ENCODE measurements at regions of chr12 and their contacts with region 1.

Region 1: DNA sequence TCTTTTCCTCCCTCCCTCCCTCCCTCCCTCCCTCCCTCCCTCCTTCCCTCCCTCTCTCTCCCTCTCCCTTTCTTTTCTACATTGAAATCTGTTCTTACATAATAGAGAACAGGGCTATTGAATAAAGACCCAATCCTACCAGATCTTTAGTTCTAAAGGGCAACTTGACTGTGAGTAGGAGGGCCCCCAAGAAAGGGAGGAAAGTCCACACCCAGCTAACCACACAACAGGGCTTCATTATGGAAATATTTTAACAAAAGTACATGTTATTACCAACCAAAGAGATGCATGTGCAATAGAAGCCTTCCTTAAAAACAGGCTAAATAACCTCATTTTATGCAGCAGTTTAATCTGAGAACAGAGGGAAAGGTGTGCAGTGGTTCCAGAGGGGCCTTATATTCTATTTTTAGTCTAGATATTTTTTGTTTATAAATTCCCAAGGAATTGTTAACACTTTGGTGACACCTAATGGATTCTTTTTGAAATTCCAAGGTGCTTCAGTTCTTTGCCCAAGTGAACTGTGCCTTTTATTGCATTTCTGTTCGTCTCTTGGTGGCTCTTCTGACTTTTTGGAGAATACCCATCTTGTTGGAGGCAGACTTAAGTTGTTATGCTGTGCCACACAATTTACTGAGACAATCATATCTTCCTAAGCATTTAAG is 63.0 kb downstream of the GNS start:
- DNase-seq: no peak
- H3K4me3 ChIP-seq: no peak overlapping the region
- CTCF ChIP-seq: no peak

Region 2: DNA sequence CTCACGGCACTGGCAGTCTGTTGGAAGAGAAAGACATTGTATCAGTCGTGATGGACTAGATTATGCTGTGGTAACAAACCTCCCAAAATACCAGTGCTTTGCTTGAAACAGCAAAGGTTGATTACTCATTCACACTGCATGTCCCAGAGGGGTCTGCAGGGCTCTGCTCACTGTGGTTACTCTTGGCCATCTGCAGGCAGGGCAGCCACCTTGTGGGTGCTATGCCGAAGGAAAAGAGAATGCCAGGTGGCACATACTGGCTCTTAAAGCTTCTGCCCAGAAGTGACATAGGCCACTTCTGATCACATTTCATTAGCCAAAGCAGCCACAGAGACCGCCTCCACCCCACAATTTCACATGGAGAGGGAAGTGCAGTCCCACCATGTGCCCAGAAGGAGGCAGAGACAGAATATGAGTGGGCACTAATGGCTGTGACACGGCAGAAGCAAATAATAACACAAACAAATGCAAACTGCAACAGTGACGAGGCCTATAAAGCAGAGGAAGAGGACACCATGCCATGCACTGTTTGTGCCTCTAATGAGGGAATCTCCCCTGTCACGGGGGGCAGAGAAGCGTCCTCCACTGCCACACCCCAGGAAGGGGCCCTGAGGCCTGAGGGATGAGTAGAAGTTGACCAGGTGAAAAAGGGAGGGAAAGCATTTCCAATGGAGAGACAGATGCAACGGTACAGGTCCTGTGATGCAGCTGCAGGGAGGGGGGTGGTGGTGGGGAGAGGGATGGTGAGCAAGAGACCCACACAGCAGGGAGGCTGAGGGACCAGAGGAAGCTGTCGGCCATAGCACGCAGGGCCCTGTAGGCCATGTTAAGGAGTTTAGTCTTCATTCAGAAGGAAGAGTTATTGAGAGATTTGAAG is 422.4 kb before region 1 on chr12:
- CTCF ChIA-PET with region 1: no interaction called
- POLR2A ChIA-PET with region 1: no interaction called
- DNase-seq: no peak
- H3K4me3 ChIP-seq: no peak overlapping the region
- CTCF ChIP-seq: peak; percentile 14

Region 3: DNA sequence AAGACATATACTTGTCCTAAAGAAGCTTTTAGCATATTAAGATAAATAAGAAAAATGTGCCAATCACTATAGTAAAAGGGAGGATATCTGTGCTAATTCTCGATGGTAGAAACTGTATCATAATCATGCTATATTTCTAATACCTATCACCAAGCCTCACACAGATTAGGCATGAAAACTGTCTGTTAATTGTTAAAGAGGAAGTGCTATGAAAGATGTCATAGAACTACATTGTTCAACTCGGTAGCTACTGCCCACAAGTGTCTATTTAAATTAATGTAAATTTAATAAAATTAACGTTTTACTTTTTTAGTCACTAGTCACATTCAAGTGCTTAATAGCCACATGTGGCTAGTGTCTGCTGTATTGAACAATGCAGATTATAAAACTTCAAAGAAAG is 396.6 kb before region 1 on chr12:
- CTCF ChIA-PET with region 1: no interaction called
- POLR2A ChIA-PET with region 1: no interaction called
- DNase-seq: no peak
- H3K4me3 ChIP-seq: no peak overlapping the region
- CTCF ChIP-seq: no peak

Region 4: GRCh38 chr12:64528616-64529015 is 167.6 kb before region 1 on chr12:
- CTCF ChIA-PET with region 1: interaction called, 16 read pairs
- POLR2A ChIA-PET with region 1: no interaction called
- DNase-seq: no peak
- H3K4me3 ChIP-seq: no peak overlapping the region
- CTCF ChIP-seq: no peak

Region 5: GRCh38 chr12:64560396-64561304 is 135.6 kb before region 1 on chr12:
- CTCF ChIA-PET with region 1: interaction called, 26 read pairs
- POLR2A ChIA-PET with region 1: no interaction called
- DNase-seq: peak; percentile 86
- H3K4me3 ChIP-seq: no peak overlapping the region
- CTCF ChIP-seq: no peak

Region 6: DNA sequence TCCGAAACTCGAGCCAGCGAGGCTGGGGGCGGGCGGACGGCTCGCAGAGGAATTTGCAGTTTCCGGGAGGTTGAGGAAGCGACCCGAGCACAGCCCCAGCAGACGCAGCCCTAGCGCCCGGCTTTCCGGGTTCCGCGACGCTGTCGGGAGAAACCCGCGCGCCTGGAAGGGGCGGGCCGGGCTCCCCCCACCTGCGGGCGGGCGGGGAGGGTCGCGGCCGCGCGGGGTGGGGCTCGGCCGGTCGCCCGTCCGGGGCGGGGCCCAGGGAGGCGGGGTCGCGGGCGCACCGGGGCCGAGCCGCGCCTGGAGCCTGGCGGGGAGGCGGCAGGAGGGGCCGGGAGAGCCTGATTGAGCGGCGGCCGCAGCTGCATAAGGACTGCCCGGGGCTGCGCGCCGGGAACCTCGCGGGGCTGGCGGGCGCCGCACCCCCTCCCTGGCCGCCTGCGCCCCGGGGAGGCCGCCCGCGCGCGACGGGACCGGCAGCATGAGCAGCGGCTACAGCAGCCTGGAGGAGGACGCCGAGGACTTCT is 86.0 kb before region 1 on chr12 and contains the start of gene RASSF3:
- CTCF ChIA-PET with region 1: interaction called, 10 read pairs
- POLR2A ChIA-PET with region 1: interaction called, 3 read pairs
- DNase-seq: no peak
- H3K4me3 ChIP-seq: peak within 1 kb of the TSS; percentile 77
- CTCF ChIP-seq: no peak

Region 7: GRCh38 chr12:64679487-64679983 is 16.7 kb before region 1 on chr12:
- CTCF ChIA-PET with region 1: interaction called, 16 read pairs
- POLR2A ChIA-PET with region 1: no interaction called
- DNase-seq: no peak
- H3K4me3 ChIP-seq: peak overlapping the region; percentile 29
- CTCF ChIP-seq: no peak

Region 8: DNA sequence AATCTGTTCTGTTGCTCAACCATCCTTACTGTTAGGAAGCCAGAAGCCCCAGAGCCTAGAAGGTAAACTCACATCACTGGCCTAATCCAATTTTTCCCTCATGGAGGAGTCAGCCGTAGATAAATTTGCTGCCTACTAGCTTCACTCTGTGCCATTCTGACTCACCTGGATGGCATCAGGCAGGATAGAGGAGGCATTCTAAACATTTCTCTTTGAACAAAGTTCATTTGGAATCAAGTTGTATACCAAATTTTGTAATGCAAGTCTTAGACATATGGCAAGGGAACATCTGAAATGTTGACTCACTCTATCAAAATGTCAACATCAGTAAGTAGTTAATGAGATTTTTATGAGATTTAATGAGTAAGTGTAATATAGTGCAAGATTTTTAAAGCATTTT is 114.6 kb after region 1 on chr12:
- CTCF ChIA-PET with region 1: no interaction called
- POLR2A ChIA-PET with region 1: no interaction called
- DNase-seq: no peak
- H3K4me3 ChIP-seq: no peak overlapping the region
- CTCF ChIP-seq: no peak

Region 9: GRCh38 chr12:64903479-64904152 is 207.4 kb after region 1 on chr12:
- CTCF ChIA-PET with region 1: no interaction called
- POLR2A ChIA-PET with region 1: no interaction called
- DNase-seq: no peak
- H3K4me3 ChIP-seq: no peak overlapping the region
- CTCF ChIP-seq: no peak